CD4-positive, alpha-beta memory T cell (primary cell): ENCODE measurements at regions of chr2 and their contacts with region 1.

Region 1: DNA sequence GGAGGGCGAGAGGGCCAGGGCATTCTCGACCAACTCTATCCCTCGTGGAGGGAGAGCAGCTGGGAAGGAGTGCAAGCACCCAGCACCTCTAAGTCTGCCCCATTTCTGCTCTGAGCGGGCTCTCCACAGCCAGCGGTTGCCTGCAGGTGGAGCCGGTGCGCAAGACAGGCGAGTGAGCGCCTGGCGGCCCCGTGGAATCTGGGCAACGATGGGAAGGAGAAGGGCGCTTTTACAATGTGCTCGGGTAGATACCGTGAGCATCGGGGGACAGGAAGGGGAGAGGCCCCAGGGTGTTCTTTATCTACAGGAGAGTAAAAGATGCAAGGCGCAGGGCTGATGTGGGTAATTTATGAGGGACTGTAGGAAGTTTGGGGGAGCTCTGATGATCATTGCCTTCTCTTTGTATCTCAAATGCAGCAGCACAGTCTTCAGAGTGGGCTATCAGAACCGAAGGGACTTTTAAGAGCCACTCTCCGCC is 867 bp upstream of the TTL start:
- DNase-seq: peak; percentile 77 to 86 (median 82)
- H3K4me3 ChIP-seq: peak overlapping the region; percentile 63 to 78
- H3K4me3 Mint-ChIP-seq: peak overlapping the region; percentile 89 to 99 (median 96)
- H3K27ac ChIP-seq: peak overlapping the region; percentile 62
- H3K27ac Mint-ChIP-seq: peak overlapping the region; percentile 84 to 97 (median 95)
- H3K4me1 ChIP-seq: peaks cover 26% of the 10 kb centered on the region
- H3K4me1 Mint-ChIP-seq: peaks cover 17 to 39% (median 25%) of the 10 kb centered on the region in 4 donors
- H3K27me3 ChIP-seq: no peaks in the 10 kb centered on the region
- H3K27me3 Mint-ChIP-seq: no peaks in the 10 kb centered on the region

Region 2: DNA sequence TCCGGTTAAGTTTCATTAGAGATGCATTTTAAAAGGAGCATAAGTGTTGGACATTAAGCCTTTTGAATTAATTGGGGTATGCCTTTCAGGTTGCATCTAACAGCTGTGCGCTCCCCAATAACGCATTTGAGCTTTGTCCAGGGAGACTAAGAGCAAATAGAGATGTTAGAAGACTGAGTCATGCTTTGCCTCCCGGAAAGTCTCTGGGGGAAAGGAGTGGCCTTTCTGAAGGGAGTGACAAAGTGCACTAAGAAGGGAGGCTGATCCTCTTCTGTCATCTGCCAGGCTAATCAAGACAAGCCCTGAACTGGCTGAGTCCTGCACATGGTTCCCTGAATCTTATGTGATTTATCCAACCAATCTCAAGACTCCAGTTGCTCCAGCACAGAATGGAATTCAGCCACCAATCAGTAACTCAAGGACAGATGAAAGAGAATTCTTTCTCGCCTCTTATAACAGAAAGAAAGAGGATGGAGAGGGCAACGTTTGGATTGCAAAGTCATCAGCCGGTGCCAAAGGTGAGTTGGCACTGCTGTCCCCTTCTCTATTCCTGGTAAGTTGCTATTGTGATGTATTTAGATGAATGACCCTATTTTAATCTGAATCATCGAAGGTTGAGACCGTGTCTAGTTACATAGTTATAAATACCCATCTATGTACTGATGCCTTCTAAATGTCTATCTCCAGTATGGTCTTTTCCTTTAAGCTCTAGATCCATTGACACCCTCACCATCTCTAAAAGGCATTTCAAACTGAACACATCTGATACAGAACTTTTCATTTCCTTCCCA is 13.0 kb after region 1 on chr2:
- CTCF ChIA-PET with region 1: interaction called, 14 read pairs
- POLR2A ChIA-PET with region 1: no interaction called
- intact Hi-C with region 1: no loop called
- DNase-seq: no peak
- H3K4me3 ChIP-seq: no peak overlapping the region
- H3K4me3 Mint-ChIP-seq: no peak overlapping the region
- H3K27ac ChIP-seq: no peak overlapping the region
- H3K27ac Mint-ChIP-seq: no peak overlapping the region
- H3K4me1 ChIP-seq: no peaks in the 10 kb centered on the region
- H3K4me1 Mint-ChIP-seq: peaks cover 0 to 2% (median under 1%) of the 10 kb centered on the region in 4 donors
- H3K27me3 ChIP-seq: no peaks in the 10 kb centered on the region
- H3K27me3 Mint-ChIP-seq: no peaks in the 10 kb centered on the region

Region 3: DNA sequence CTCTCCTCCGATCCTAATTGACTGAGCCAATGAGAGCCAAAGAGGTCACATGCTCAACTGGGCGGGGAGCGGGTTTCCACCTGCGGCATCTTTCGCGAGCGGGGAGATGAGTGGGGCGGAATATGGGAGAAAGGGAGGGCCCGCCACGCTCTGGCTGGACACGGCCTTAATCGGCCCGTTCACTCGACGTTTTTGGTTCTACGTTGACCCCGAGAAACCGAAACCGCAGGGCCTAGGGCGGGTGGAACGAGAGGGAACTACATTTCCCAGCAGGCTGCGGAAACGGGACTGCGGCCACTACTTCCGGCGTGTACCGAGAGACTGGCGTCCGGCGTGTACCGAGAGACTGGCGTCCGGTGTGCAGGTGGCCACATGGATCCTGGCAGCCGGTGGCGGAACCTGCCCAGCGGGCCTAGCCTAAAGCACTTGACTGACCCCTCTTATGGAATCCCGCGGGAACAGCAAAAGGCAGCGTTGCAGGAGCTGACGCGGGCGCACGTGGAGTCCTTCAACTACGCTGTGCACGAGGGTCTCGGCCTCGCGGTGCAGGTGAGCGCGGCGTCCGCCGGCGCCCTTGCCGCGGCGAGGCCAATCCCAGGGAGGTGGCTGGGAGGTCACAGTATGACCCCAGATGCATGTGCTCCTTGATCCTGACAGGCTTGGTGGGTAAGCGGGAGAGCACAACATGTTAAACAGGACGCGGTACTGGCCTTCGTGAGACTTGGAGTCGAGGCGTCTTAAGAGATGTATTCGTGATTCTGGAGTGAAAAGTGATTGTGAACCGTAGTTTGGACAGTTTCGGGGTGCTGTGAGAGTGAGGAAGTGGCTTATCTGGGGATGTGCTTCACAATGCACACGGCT is 61.3 kb after region 1 on chr2 and contains the start of gene POLR1B:
- CTCF ChIA-PET with region 1: interaction called, 6 read pairs
- POLR2A ChIA-PET with region 1: interaction called, 21 read pairs
- intact Hi-C with region 1: loop called (anchors 1 kb)
- DNase-seq: peak; percentile 77 to 85 (median 81)
- H3K4me3 ChIP-seq: peak within 1 kb of the TSS; percentile 70 to 98
- H3K4me3 Mint-ChIP-seq: no peak within 1 kb of the TSS
- H3K27ac ChIP-seq: peak within 1 kb of the TSS; percentile 90
- H3K27ac Mint-ChIP-seq: no peak within 1 kb of the TSS
- H3K4me1 ChIP-seq: peaks cover 24% of the 10 kb centered on the region
- H3K4me1 Mint-ChIP-seq: peaks cover 5 to 12% (median 10%) of the 10 kb centered on the region in 4 donors
- H3K27me3 ChIP-seq: no peaks in the 10 kb centered on the region
- H3K27me3 Mint-ChIP-seq: no peaks in the 10 kb centered on the region
- total RNA-seq, gene POLR1B: 29.7 to 31.3 TPM

Region 4: DNA sequence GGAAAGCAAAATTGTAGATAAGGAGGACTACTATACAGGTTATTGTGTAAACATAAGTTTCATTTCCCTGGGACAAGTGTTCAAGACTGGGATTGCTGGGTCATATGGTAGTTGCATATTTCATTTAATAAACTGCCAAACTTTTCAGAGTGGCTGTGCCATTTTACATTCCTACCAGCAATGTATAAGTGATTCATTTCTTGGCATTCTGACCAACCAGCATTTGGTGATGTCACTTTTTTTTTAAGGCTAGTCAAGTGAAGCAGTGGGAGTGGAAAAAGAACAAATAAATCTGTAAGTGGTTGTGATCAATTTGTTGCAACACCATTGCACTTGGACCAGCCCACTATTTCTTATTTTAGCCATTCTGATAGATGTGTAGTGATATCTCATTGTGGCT is 98.2 kb after region 1 on chr2:
- CTCF ChIA-PET with region 1: interaction called, 27 read pairs
- POLR2A ChIA-PET with region 1: interaction called, 12 read pairs
- intact Hi-C with region 1: loop called (anchors 1 kb)
- DNase-seq: no peak
- H3K4me3 ChIP-seq: no peak overlapping the region
- H3K4me3 Mint-ChIP-seq: no peak overlapping the region
- H3K27ac ChIP-seq: no peak overlapping the region
- H3K27ac Mint-ChIP-seq: no peak overlapping the region
- H3K4me1 ChIP-seq: peaks cover 10% of the 10 kb centered on the region
- H3K4me1 Mint-ChIP-seq: peaks cover 8 to 23% (median 11%) of the 10 kb centered on the region in 4 donors
- H3K27me3 ChIP-seq: no peaks in the 10 kb centered on the region
- H3K27me3 Mint-ChIP-seq: no peaks in the 10 kb centered on the region

Region 5: DNA sequence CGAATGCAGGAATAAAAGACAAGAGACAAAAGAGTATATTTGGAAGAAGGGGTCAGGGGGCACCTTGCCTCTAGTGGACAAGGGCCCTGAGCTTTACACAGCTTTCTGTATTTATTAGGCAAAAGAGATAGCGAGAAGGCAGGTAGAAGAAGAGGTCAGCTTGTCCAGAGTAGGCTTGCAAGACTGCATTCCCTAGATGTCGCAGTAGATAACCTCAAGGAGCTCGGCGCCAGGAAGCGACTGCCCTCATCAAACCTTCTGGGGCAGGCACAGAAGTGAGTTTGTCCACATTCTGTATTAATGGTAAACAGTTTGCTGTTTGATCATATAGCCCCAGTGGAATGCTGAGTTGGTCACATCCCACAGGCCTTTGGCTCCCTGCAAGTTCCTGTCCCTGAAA is 110.3 kb after region 1 on chr2:
- CTCF ChIA-PET with region 1: no interaction called
- POLR2A ChIA-PET with region 1: no interaction called
- intact Hi-C with region 1: no loop called
- DNase-seq: no peak
- H3K4me3 ChIP-seq: no peak overlapping the region
- H3K4me3 Mint-ChIP-seq: no peak overlapping the region
- H3K27ac ChIP-seq: no peak overlapping the region
- H3K27ac Mint-ChIP-seq: peak overlapping the region in 1 of 7 donors; percentile 29
- H3K4me1 ChIP-seq: peaks cover under 1% of the 10 kb centered on the region
- H3K4me1 Mint-ChIP-seq: peaks cover 1 to 15% (median 6%) of the 10 kb centered on the region in 4 donors
- H3K27me3 ChIP-seq: no peaks in the 10 kb centered on the region
- H3K27me3 Mint-ChIP-seq: no peaks in the 10 kb centered on the region

Region 6: DNA sequence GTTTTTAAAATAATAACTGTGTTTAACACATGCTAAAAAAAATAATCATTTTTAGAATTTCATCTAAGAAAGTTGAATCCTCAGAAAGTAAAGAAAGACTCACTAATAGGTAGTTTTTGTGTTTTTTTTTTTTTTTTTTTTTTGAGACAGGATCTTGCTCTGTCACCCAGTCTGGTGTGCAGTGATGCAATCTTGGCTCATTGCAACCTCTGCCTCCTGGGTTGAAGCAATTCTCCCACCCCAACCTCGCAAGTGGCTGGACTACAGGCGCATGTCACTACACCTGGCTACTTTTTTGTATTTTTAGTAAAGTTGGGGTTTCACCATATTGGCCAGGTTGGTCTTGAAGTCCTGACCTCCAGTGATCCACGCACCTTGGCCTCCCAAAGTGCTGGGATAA is 276.2 kb after region 1 on chr2:
- CTCF ChIA-PET with region 1: no interaction called
- POLR2A ChIA-PET with region 1: no interaction called
- intact Hi-C with region 1: no loop called
- DNase-seq: no peak
- H3K4me3 ChIP-seq: no peak overlapping the region
- H3K4me3 Mint-ChIP-seq: no peak overlapping the region
- H3K27ac ChIP-seq: no peak overlapping the region
- H3K27ac Mint-ChIP-seq: no peak overlapping the region
- H3K4me1 ChIP-seq: peaks cover 9% of the 10 kb centered on the region
- H3K4me1 Mint-ChIP-seq: peaks cover 10 to 37% (median 22%) of the 10 kb centered on the region in 4 donors
- H3K27me3 ChIP-seq: no peaks in the 10 kb centered on the region
- H3K27me3 Mint-ChIP-seq: no peaks in the 10 kb centered on the region